ENCODE measurements at regions of chr1 and their contacts with region 1.

Region 1: GRCh38 chr1:204446370-204447111 is 34.9 kb upstream of the PPP1R15B start:
- DNase-seq: peak; percentile 76 to 81 (median 79)
- H3K4me3 ChIP-seq: no peak overlapping the region
- H3K4me3 Mint-ChIP-seq: peak overlapping the region in 1 of 8 donors; percentile 30
- H3K27ac ChIP-seq: peak overlapping the region; percentile 29
- H3K27ac Mint-ChIP-seq: peak overlapping the region; percentile 88 to 94 (median 92)
- H3K4me1 ChIP-seq: peaks cover 27% of the 10 kb centered on the region
- H3K4me1 Mint-ChIP-seq: peaks cover 14 to 54% (median 30%) of the 10 kb centered on the region in 4 donors
- H3K27me3 ChIP-seq: no peaks in the 10 kb centered on the region
- H3K27me3 Mint-ChIP-seq: no peaks in the 10 kb centered on the region

Region 2: GRCh38 chr1:204398217-204399081 is 48.1 kb before region 1 on chr1:
- CTCF ChIA-PET with region 1: interaction called, 17 read pairs
- POLR2A ChIA-PET with region 1: no interaction called
- intact Hi-C with region 1: no loop called
- DNase-seq: peak; percentile 67 to 78 (median 71)
- H3K4me3 ChIP-seq: no peak overlapping the region
- H3K4me3 Mint-ChIP-seq: no peak overlapping the region
- H3K27ac ChIP-seq: no peak overlapping the region
- H3K27ac Mint-ChIP-seq: peak overlapping the region; percentile 74 to 92 (median 89)
- H3K4me1 ChIP-seq: peaks cover under 1% of the 10 kb centered on the region
- H3K4me1 Mint-ChIP-seq: peaks cover 0 to 12% (median 4%) of the 10 kb centered on the region in 4 donors
- H3K27me3 ChIP-seq: no peaks in the 10 kb centered on the region
- H3K27me3 Mint-ChIP-seq: no peaks in the 10 kb centered on the region

Region 3: DNA sequence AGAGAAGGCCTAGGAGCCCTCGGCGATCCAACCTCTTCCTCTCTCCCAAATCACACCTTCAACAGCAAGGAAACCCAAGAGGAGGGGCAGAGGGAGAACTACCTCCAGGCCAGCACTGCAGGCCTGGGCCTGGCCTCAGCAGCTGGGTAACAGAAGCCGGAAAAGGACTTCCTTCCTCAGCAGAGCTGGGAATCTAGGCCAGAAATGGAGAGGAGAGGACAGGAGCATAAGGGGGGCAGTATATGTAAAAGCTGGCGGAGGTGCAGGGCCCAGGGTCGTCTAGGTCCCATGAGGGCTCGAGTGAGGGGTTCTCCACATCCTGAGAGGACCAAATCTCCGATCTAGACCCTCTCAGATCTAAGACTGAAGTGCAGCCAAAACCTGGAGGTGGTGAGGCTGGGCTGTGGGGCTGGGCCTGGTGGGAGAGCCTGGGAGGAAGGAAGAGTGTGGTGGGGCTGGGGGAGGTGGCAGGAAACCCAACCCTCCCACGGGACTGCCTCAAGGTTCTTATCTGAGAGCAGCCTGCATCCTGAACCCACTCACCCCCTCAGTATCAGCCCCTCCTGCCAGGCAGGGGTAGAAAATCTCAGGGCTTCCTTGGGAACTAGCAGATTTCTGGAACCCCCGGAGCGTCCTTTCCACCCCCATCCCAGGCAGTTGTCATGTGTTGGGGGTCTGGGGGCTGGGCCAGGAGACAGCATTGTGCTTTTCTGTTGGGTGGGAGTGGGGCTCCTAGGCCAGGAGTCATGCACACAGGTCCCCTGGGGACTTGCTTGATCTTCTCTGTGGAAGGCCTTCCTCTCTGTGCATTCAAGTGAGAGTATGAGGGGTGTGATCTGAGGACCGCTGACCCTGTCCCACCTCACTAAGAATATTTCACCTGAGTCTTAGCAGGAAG is 15.0 kb after region 1 on chr1:
- CTCF ChIA-PET with region 1: interaction called, 34 read pairs
- POLR2A ChIA-PET with region 1: no interaction called
- intact Hi-C with region 1: no loop called
- DNase-seq: peak; percentile 29 to 71 (median 36)
- H3K4me3 ChIP-seq: no peak overlapping the region
- H3K4me3 Mint-ChIP-seq: peak overlapping the region; percentile 54 to 83 (median 78)
- H3K27ac ChIP-seq: peak overlapping the region; percentile 60
- H3K27ac Mint-ChIP-seq: peak overlapping the region; percentile 84 to 98 (median 95)
- H3K4me1 ChIP-seq: peaks cover 67% of the 10 kb centered on the region
- H3K4me1 Mint-ChIP-seq: peaks cover 47 to 71% (median 57%) of the 10 kb centered on the region in 4 donors
- H3K27me3 ChIP-seq: no peaks in the 10 kb centered on the region
- H3K27me3 Mint-ChIP-seq: no peaks in the 10 kb centered on the region

Region 4: DNA sequence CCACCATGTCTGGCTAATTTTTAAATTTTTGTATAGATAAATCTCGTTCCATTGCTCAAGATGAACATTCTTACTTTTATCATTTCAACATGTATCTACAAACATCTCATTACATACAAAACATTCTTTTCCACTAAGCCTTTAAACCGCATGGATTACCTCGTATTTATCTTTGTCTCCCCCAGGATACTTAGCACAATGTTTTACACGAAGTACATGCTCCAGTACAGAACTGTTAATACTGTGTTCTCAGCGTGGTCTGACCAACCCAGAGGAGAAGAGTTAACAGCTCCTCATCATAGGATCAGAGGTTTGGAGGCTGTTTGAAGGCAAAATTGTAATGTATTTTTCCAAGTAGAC is 40.7 kb after region 1 on chr1:
- CTCF ChIA-PET with region 1: interaction called, 1,077 read pairs
- POLR2A ChIA-PET with region 1: interaction called, 136 read pairs
- intact Hi-C with region 1: no loop called
- DNase-seq: no peak
- H3K4me3 ChIP-seq: no peak overlapping the region
- H3K4me3 Mint-ChIP-seq: peak overlapping the region in 1 of 8 donors; percentile 3
- H3K27ac ChIP-seq: no peak overlapping the region
- H3K27ac Mint-ChIP-seq: peak overlapping the region in 1 of 7 donors; percentile 64
- H3K4me1 ChIP-seq: peaks cover 37% of the 10 kb centered on the region
- H3K4me1 Mint-ChIP-seq: peaks cover 37 to 72% (median 53%) of the 10 kb centered on the region in 4 donors
- H3K27me3 ChIP-seq: no peaks in the 10 kb centered on the region
- H3K27me3 Mint-ChIP-seq: no peaks in the 10 kb centered on the region

Region 5: DNA sequence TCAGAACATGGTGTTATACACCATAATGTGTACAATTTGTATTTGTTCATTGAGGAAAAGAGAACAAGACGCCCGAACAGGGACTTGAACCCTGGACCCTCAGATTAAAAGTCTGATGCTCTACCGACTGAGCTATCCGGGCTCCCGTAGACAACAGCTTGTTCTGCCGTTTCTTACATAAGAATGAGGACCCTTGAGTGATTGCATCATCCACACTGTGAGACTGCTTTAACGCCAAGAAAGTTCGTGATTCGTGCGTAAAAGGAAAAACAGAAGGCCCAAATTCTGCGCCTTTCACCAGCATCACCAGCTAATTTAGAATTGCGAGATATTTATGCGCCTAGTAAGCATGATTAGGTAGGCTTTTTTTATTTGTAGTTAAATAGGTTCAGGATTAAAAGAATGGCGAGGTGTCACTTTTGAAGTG is 60.4 kb after region 1 on chr1:
- CTCF ChIA-PET with region 1: interaction called, 1,077 read pairs
- POLR2A ChIA-PET with region 1: interaction called, 30 read pairs
- intact Hi-C with region 1: loop called (anchors 1 kb)
- DNase-seq: peak; percentile 93 to 94 (median 94)
- H3K4me3 ChIP-seq: peak overlapping the region; percentile 53 to 83
- H3K4me3 Mint-ChIP-seq: peak overlapping the region; percentile 86 to 97 (median 92)
- H3K27ac ChIP-seq: peak overlapping the region; percentile 78
- H3K27ac Mint-ChIP-seq: peak overlapping the region; percentile 87 to 100 (median 99)
- H3K4me1 ChIP-seq: peaks cover 29% of the 10 kb centered on the region
- H3K4me1 Mint-ChIP-seq: peaks cover 21 to 45% (median 33%) of the 10 kb centered on the region in 4 donors
- H3K27me3 ChIP-seq: no peaks in the 10 kb centered on the region
- H3K27me3 Mint-ChIP-seq: peaks cover 2 to 13% of the 10 kb centered on the region in 2 donors

Region 6: GRCh38 chr1:204523605-204524215 is 77.2 kb after region 1 on chr1:
- CTCF ChIA-PET with region 1: interaction called, 10 read pairs
- POLR2A ChIA-PET with region 1: interaction called, 3 read pairs
- intact Hi-C with region 1: no loop called
- DNase-seq: no peak
- H3K4me3 ChIP-seq: no peak overlapping the region
- H3K4me3 Mint-ChIP-seq: peak overlapping the region in 7 of 8 donors; percentile 21 to 86 (median 55)
- H3K27ac ChIP-seq: no peak overlapping the region
- H3K27ac Mint-ChIP-seq: peak overlapping the region; percentile 14 to 95 (median 67)
- H3K4me1 ChIP-seq: peaks cover 62% of the 10 kb centered on the region
- H3K4me1 Mint-ChIP-seq: peaks cover 32 to 62% (median 44%) of the 10 kb centered on the region in 4 donors
- H3K27me3 ChIP-seq: no peaks in the 10 kb centered on the region
- H3K27me3 Mint-ChIP-seq: no peaks in the 10 kb centered on the region

Region 7: GRCh38 chr1:204763706-204764427 is 317.3 kb after region 1 on chr1:
- CTCF ChIA-PET with region 1: interaction called, 5 read pairs
- POLR2A ChIA-PET with region 1: no interaction called
- intact Hi-C with region 1: loop called (anchors 1 kb)
- DNase-seq: peak; percentile 44 to 62 (median 58)
- H3K4me3 ChIP-seq: no peak overlapping the region
- H3K4me3 Mint-ChIP-seq: peak overlapping the region in 4 of 8 donors; percentile 25 to 62 (median 49)
- H3K27ac ChIP-seq: no peak overlapping the region
- H3K27ac Mint-ChIP-seq: no peak overlapping the region
- H3K4me1 ChIP-seq: peaks cover 6% of the 10 kb centered on the region
- H3K4me1 Mint-ChIP-seq: peaks cover 4 to 7% (median 6%) of the 10 kb centered on the region in 4 donors
- H3K27me3 ChIP-seq: no peaks in the 10 kb centered on the region
- H3K27me3 Mint-ChIP-seq: peaks cover 13 to 24% of the 10 kb centered on the region in 2 donors

Measured in CD4-positive, alpha-beta memory T cell (primary cell).